SK-N-SH (cell line): ENCODE measurements at regions of chr2 and their contacts with region 1.

Region 1: DNA sequence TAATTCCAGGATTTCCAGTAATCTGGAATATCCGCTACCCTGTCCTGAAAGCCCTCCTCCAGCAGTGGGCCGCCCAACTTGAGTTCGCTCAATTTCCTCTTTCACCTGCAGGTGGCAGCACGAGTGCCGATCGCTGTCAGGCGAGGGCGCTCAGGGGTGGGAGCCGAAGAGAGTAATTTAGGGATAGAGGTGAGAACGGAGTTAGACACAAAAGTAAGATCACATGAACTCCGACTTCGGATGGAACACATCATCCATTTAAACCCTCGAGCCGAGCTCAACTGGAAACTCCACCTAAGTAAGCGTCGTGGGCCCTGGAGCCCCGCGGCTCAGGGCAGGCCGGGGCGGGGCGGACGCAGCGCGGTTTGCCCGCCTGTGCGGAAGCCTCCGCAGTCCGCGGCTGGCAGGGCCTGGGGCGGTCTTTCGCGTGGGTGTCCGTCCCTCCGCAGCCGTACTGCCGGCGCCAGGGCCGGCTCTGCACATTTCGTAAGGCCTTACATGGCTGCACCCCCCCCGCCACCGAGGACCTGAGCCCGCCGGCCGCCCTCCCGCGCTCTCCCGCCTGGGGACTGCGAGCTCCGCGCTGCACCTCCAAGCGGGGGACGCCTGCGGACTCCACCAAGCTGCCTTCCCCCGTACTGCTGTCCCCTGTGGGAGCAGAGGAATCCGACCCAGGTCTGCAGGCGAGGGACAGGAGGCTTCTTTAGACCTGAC is 61.2 kb downstream of the SEMA4F start:
- DNase-seq: peak; percentile 89
- H3K4me3 ChIP-seq: peak overlapping the region; percentile 63 to 64
- H3K27ac ChIP-seq: peak overlapping the region in 1 of 2 experiments; percentile 53; a peak in 1 of 4 replicates
- H3K4me1 ChIP-seq: peaks cover 0 to 4% of the 10 kb centered on the region in 2 experiments; a peak in 2 of 4 replicates
- H3K27me3 ChIP-seq: no peaks in the 10 kb centered on the region
- CTCF ChIP-seq: peak; percentile 93
- EP300 ChIP-seq: no peak
- RAD21 ChIP-seq: peak; percentile 81

Region 2: DNA sequence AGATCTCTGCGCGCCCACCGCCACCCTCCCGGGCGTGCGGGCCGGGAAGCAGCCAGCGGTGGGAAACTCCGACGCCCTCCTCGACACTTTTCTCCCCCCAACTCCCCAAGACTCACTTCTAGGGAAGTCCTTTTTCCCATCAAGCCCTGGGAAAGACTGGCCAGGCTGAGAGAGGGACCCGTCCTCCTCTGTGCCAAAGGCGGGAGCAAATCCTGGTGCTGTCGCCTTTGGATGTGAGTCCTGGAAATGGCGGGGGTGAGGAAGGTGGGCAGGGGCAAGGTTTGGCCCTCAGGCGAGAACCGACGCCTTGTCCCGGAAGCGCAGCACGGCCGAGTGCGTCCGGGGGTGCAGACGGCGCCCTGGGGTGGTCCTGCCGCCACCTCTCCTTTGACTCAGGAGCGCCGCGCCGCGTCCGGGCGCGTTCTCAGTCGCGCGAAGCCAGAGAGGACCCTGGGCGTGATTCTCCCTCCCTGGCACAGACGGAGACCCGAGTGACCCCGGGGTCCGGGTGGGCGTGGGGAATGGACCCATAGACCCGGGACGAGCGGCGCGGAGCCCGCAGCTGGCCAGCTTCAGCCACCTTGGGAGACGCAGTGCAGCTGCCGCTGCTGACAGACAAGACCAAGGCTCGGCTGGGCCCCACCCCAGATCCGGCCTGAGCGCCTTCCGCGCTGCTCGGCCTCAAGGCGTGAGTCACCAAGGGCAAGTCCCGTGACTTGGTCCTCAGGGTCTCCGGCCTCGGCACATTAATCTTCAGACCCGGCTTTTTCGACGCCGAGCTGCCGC is 212.3 kb before region 1 on chr2:
- CTCF ChIA-PET with region 1: no interaction called
- POLR2A ChIA-PET with region 1: no interaction called
- DNase-seq: peak; percentile 30
- H3K4me3 ChIP-seq: no peak overlapping the region
- H3K27ac ChIP-seq: no peak overlapping the region; a peak in 1 of 4 replicates
- H3K4me1 ChIP-seq: peaks cover 12 to 37% of the 10 kb centered on the region in 2 experiments; a peak in 2 of 4 replicates
- H3K27me3 ChIP-seq: no peaks in the 10 kb centered on the region
- CTCF ChIP-seq: no peak
- EP300 ChIP-seq: no peak
- RAD21 ChIP-seq: no peak

Region 3: DNA sequence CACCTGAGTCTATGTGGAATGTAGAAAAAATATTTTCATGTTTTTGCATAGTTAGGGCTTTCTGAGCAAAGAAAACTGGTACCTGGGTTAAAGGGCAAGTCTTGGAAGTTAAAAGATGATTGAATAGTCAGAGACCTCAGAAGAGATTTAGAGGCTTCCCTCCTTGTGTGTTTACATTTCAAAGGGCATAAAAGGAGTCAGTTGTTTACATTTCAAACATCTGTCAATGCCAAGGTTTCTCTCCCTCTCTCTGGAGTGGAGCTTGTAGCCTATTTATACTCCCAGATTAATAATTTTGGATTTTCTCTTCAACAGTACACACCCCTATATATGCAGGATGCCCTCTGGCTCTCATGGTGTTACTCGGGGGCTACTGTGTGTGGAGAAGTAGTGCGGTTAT is 75.7 kb before region 1 on chr2:
- CTCF ChIA-PET with region 1: no interaction called
- POLR2A ChIA-PET with region 1: no interaction called
- DNase-seq: no peak
- H3K4me3 ChIP-seq: no peak overlapping the region
- H3K27ac ChIP-seq: no peak overlapping the region
- H3K4me1 ChIP-seq: no peaks in the 10 kb centered on the region
- H3K27me3 ChIP-seq: no peaks in the 10 kb centered on the region; the same call in 1 of the 2 replicates
- CTCF ChIP-seq: no peak
- EP300 ChIP-seq: no peak
- RAD21 ChIP-seq: no peak

Region 4: DNA sequence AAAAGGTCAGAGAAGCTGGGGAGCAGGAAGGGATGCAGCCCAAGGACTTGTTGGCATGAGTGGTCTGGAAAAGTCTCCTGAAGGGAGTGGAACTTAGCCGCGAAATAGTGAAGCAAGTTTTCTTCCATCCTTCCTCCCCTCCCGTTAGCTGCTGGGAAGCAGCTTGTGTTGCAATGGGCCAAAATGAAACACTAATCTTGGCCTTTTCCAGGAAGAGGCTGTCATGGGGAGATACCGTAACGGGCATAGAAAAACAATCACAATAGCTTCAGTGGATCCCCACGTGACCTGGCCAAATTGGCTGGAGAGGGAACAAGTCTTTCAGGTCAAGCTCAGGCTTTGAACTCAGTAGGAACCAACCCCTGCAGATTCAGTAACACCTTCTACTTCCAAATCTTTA is 11.9 kb before region 1 on chr2:
- CTCF ChIA-PET with region 1: interaction called, 49 read pairs
- POLR2A ChIA-PET with region 1: no interaction called
- DNase-seq: no peak
- H3K4me3 ChIP-seq: no peak overlapping the region
- H3K27ac ChIP-seq: no peak overlapping the region
- H3K4me1 ChIP-seq: peaks cover 0 to 2% of the 10 kb centered on the region in 2 experiments; a peak in 1 of 4 replicates
- H3K27me3 ChIP-seq: no peaks in the 10 kb centered on the region
- CTCF ChIP-seq: no peak
- EP300 ChIP-seq: no peak
- RAD21 ChIP-seq: no peak

Region 5: DNA sequence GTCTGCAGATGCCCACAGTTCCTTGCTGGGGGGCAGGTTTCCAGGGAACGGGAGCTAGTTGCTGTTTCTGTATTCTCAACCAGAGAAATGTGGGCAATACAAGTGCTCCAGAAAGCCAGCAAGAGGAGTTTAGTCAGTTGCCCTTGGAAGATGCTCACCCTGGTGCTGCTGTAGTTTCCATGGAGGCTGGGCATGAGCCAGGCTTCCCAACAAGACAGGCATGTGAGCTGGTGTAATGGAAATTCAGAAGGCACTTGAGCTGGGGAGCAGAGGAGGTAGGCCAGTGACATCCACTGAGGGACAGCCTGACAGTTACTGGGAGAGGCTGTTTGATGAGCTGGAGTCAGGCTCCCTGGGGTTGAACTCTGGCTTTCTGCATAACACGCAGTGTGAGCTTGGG is 126.4 kb after region 1 on chr2:
- CTCF ChIA-PET with region 1: interaction called, 63 read pairs
- POLR2A ChIA-PET with region 1: no interaction called
- DNase-seq: no peak
- H3K4me3 ChIP-seq: no peak overlapping the region
- H3K27ac ChIP-seq: no peak overlapping the region
- H3K4me1 ChIP-seq: peaks cover 40 to 57% of the 10 kb centered on the region in 2 experiments
- H3K27me3 ChIP-seq: no peaks in the 10 kb centered on the region
- CTCF ChIP-seq: no peak
- EP300 ChIP-seq: no peak
- RAD21 ChIP-seq: no peak

Region 6: DNA sequence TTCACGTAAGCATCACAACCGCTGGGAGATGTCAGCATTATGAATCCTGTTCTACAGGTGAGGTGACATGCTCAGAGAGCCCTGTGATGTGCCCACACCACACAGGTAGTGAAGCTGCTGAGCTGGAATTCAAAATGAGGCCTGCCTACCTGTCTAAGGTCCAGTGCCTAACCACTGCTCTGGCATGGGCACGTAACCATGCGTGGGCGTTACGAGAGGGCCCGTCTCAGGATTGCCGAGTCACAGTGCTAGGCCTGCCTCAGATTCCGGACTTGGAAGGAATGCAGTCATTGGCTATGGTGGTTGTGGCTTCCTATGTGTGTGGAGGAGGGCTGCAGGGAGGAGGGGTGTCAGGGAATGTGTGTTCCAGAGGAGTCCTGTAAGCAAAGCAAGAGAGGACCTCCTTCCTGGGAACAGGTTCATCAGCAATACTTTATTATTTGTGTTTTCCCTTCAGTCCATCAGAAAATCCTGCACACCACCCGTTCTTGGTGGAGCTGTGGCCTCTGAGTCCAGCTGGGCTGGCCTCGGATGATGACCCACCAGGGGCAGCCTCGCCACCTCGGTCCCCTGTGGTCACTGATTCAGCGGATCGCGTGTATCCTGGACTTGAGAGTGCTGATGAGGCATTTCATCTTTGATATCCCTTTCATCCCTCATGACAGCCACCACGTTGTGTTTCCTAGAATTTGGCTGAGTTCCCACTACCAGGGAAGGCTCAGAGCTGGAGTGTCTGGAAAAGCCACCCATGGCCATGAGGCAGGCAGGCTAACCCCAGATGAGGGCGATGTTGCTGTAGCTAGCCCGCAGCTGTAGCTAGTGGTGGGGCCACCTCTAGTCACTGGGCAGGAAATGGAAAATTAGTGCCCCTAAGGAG is 149.8 kb after region 1 on chr2:
- CTCF ChIA-PET with region 1: interaction called, 16 read pairs
- POLR2A ChIA-PET with region 1: no interaction called
- DNase-seq: peak; percentile 46
- H3K4me3 ChIP-seq: no peak overlapping the region
- H3K27ac ChIP-seq: no peak overlapping the region; a peak in 1 of 4 replicates
- H3K4me1 ChIP-seq: peaks cover 4 to 49% of the 10 kb centered on the region in 2 experiments; a peak in 3 of 4 replicates
- H3K27me3 ChIP-seq: no peaks in the 10 kb centered on the region
- CTCF ChIP-seq: no peak
- EP300 ChIP-seq: no peak
- RAD21 ChIP-seq: no peak

Region 7: GRCh38 chr2:75002007-75002406 is 286.8 kb after region 1 on chr2:
- CTCF ChIA-PET with region 1: no interaction called
- POLR2A ChIA-PET with region 1: no interaction called
- DNase-seq: no peak
- H3K4me3 ChIP-seq: no peak overlapping the region
- H3K27ac ChIP-seq: no peak overlapping the region
- H3K4me1 ChIP-seq: no peaks in the 10 kb centered on the region; a peak in 1 of 4 replicates
- H3K27me3 ChIP-seq: no peaks in the 10 kb centered on the region
- CTCF ChIP-seq: no peak
- EP300 ChIP-seq: no peak
- RAD21 ChIP-seq: no peak